HepG2 (cell line): ENCODE measurements at regions of chr12 and their contacts with region 1.

Region 1: DNA sequence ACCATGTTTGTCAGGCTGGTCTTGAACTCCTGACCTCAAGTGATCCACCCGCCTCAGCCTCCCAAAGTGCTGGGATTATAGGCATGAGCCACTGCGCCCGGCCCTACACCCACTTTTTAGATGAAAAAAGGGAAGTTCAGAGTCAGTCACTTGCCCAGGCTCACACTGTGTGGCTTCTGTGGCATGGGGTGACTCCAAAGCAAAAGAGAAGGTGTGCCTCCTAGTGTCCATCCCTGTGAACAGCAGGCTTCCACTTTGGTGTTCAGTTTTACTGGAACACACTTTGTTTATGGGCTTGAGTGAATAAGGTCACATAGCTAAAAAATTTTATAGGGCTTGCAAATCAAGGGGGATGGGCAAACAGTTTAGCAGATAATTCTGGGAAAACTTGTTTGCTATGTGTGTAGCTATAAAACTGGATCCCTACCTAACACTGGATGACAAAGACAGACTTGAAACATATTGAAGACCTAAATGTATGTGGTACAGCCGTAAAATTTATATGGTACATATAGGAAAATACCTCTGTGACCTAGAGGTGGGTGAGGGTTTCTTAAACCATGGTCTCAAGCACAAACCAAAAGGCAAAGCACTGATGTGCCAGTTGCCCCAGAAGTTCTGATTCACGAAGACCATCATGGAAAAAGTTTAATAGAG is 54.9 kb downstream of the EID3 start:
- DNase-seq: peak; percentile 41
- ATAC-seq: peak; percentile 63
- H3K4me3 ChIP-seq: no peak overlapping the region
- H3K27ac ChIP-seq: no peak overlapping the region
- H3K4me1 ChIP-seq: no peaks in the 10 kb centered on the region
- H3K27me3 ChIP-seq: no peaks in the 10 kb centered on the region
- CTCF ChIP-seq: peak; percentile 85
- EP300 ChIP-seq: no peak
- POLR2A ChIP-seq: no peak
- RAD21 ChIP-seq: peak; percentile 42

Region 2: DNA sequence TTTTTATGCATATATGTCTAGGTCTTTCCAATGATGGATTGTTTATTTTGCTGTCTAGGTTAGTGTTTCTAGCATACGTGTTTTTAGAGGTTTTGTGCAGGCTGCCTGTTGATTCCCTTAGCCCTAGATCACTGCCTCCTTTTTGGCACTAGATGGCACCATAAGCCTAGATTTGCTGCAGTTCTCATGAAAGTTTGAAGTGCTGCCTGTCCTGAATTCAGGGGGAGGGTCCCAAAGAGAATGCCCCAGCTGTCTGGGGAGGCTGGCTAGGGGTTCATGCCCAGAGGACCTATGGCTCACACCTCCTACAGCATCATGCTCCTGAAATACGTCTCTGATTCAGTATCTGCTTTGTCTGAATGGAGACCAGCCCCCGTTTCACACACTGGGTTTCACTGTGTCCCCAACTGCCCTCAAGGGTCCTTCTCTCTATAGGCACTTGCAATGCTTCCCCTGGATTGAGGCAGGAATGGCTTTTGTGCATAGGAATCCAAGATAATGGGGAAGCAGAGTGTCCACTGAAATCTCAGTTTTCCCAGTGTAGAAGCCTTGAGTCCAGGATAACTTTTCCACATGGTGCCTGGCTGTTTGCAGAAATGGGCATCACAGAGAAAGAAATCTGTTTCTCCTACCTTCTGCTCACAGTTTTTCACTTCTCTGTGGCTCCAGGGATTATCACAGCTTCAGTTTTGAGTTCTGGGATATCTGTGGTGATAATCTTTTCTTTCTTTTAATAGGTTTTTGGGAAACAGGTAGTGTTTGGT is 157.1 kb before region 1 on chr12:
- CTCF ChIA-PET with region 1: interaction called, 29 read pairs
- POLR2A ChIA-PET with region 1: no interaction called
- in situ Hi-C with region 1: loop called (anchors 5 kb)
- intact Hi-C with region 1: loop called (anchors 1 kb)
- DNase-seq: peak; percentile 55
- ATAC-seq: peak; percentile 90
- H3K4me3 ChIP-seq: no peak overlapping the region
- H3K27ac ChIP-seq: no peak overlapping the region
- H3K4me1 ChIP-seq: no peaks in the 10 kb centered on the region
- H3K27me3 ChIP-seq: peaks cover 0 to 9% of the 10 kb centered on the region in 2 experiments; a peak in 3 of 5 replicates
- CTCF ChIP-seq: peak; percentile 90
- EP300 ChIP-seq: no peak
- POLR2A ChIP-seq: no peak
- RAD21 ChIP-seq: peak; percentile 82

Region 3: DNA sequence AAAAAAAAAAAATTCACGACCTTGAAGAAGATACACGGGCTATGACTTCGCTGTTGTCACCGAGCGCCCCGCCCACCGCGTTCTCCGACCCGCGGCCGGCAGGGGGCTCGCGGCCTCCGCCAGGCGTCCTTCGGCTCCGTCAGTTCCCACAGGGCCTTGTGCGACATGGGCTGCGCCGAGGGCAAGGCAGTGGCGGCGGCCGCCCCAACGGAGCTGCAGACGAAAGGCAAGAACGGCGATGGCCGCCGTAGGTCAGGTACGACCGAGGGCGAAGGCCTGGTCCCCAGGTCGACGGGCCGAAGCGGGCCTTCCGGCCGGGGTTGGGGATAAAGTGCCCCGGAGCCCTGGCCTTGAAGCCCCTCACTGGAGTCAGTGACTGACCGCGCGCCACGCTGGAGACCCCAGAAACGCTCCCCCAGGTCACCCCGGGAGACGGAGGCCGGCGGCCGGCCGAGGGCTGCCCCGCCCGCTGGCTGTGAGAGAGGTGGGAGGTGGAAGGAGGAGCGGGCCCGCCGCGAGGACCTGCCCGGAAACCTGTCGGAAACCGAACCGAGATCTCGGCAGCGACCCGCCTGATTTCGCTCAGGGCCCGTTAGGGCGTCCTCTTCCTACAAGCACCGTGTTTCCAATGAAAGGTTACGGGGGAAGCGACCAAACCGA is 142.7 kb before region 1 on chr12 and contains the start of gene TXNRD1:
- CTCF ChIA-PET with region 1: no interaction called
- POLR2A ChIA-PET with region 1: no interaction called
- in situ Hi-C with region 1: no loop called
- intact Hi-C with region 1: loop called (anchors 1 kb)
- DNase-seq: peak; percentile 30
- ATAC-seq: peak; percentile 92
- H3K4me3 ChIP-seq: peak within 1 kb of the TSS in 1 of 3 experiments; percentile 50; a peak in 1 of 6 replicates
- H3K27ac ChIP-seq: no peak within 1 kb of the TSS
- H3K4me1 ChIP-seq: peaks cover 19% of the 10 kb centered on the region
- H3K27me3 ChIP-seq: no peaks in the 10 kb centered on the region
- CTCF ChIP-seq: peak; percentile 83
- EP300 ChIP-seq: no peak
- POLR2A ChIP-seq: no peak
- RAD21 ChIP-seq: peak; percentile 76
- total RNA-seq, gene TXNRD1: 190 and 310 TPM in 2 replicates

Region 4: DNA sequence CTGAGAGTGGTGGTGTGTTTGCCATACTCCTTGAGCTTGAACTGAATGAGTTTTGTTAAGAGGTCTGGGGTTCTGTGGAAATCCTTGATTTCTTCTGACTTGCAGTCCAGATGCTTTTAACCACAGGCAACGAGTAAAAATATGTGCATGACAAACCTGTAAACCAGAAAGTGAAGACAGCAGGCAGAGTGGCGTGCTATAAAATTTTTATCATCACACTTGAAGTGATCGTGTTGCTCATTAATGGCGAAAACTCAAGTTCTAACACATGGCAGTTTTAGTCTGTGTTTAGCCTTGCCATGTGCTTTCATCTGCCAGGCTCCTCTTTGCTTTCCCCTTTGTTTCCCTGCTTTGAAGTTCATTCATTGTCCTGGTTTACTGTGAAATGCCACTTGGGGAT is 114.9 kb before region 1 on chr12:
- CTCF ChIA-PET with region 1: no interaction called
- POLR2A ChIA-PET with region 1: no interaction called
- in situ Hi-C with region 1: no loop called
- intact Hi-C with region 1: no loop called
- DNase-seq: no peak
- ATAC-seq: no peak
- H3K4me3 ChIP-seq: no peak overlapping the region
- H3K27ac ChIP-seq: no peak overlapping the region
- H3K4me1 ChIP-seq: no peaks in the 10 kb centered on the region
- H3K27me3 ChIP-seq: peaks cover 0 to 3% of the 10 kb centered on the region in 2 experiments; a peak in 1 of 5 replicates
- CTCF ChIP-seq: no peak
- EP300 ChIP-seq: no peak
- POLR2A ChIP-seq: no peak
- RAD21 ChIP-seq: no peak

Region 5: DNA sequence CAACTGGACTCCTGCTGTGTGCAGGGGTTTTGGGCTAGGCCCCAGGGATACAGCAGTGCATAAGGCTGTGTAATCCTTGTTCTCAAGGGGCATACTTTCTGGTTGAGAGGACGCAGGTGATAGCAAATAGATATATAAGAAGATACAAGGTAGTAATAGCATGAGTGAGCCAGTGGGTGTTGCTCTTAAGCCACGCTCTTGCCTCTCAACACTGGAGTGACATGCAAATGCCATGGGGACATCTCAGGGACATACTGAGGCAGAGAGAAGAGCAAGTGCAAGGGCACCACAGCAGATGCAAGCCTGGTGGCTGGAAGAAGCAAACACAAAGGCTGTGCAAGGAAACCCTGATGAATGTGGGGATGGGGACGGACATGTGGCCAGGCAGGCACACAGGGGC is 321.6 kb after region 1 on chr12:
- CTCF ChIA-PET with region 1: no interaction called
- POLR2A ChIA-PET with region 1: no interaction called
- in situ Hi-C with region 1: no loop called
- intact Hi-C with region 1: no loop called
- DNase-seq: peak; percentile 11
- ATAC-seq: peak; percentile 72
- H3K4me3 ChIP-seq: no peak overlapping the region
- H3K27ac ChIP-seq: no peak overlapping the region
- H3K4me1 ChIP-seq: no peaks in the 10 kb centered on the region
- H3K27me3 ChIP-seq: peaks cover 0 to 22% of the 10 kb centered on the region in 2 experiments; a peak in 3 of 5 replicates
- CTCF ChIP-seq: peak; percentile 53
- EP300 ChIP-seq: no peak
- POLR2A ChIP-seq: no peak
- RAD21 ChIP-seq: no peak